ENCODE measurements at regions of chr15 and their contacts with region 1.

Region 1: DNA sequence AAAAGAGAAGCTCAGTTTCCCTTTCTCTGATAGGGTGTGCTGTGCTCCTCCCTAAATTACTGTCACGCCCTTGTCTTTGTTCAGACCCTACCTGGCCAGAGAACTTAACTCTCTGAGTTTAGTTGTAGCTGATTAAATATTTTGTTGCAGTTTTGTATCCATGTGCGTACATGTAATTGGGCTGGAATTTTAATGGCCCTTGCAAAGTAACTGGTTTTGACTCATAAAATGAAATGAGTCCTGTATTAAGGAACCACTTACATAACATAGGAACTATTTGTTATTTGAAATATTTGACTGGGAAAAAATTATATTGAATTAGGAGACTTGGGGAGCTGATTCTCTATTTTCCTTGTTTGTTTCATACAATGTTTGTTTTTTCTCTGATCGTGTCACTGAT is 80.2 kb downstream of the LRRK1 start:
- DNase-seq: peak; percentile 58
- ATAC-seq: peak; percentile 65
- H3K4me3 ChIP-seq: no peak overlapping the region
- H3K27ac ChIP-seq: peak overlapping the region; percentile 35
- H3K4me1 ChIP-seq: peaks cover 28% of the 10 kb centered on the region
- H3K27me3 ChIP-seq: no peaks in the 10 kb centered on the region
- CTCF ChIP-seq: no peak

Region 2: DNA sequence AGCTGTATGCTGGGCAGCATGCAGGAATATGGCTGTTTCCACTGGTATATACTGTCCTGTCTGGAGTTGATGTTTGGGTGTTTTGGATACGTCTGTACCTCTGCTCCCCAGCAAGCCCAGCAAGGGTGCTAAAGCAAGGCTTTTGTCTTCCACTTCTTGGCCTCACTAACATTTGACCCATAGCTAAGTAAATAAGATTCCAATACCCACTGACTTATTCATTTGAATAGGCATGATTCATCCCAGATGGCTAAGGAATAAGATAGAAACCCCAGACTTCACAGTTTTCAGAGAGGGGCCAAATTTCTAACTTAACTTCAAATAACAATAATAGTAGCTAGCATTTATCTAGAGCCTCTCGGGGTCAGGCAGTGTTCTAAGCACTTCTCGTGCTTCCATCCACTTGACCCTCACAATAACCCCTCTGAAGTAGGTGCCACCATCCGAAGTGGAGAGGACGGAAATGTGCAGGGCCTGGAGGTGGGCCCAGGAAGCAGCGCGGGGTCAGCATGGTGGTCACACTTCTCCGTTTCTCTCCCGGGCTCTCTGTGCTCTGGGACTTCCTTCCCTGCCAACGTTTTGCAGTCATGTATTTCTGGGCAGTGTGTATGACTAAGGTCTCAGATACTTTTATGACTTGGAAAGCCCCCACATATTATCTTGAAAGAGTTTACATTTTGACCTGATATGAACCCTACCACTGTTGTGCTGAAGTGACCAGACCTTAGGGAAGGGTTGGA is 40.9 kb before region 1 on chr15:
- CTCF ChIA-PET with region 1: interaction called, 3 read pairs
- POLR2A ChIA-PET with region 1: no interaction called
- intact Hi-C with region 1: loop called (anchors 1 kb)
- DNase-seq: peak; percentile 77
- ATAC-seq: peak; percentile 81
- H3K4me3 ChIP-seq: peak overlapping the region; percentile 55
- H3K27ac ChIP-seq: peak overlapping the region; percentile 96
- H3K4me1 ChIP-seq: peaks cover 30% of the 10 kb centered on the region
- H3K27me3 ChIP-seq: no peaks in the 10 kb centered on the region
- CTCF ChIP-seq: no peak

Region 3: GRCh38 chr15:101024073-101024695 is 24.8 kb after region 1 on chr15:
- CTCF ChIA-PET with region 1: no interaction called
- POLR2A ChIA-PET with region 1: no interaction called
- intact Hi-C with region 1: no loop called
- DNase-seq: no peak
- ATAC-seq: no peak
- H3K4me3 ChIP-seq: no peak overlapping the region
- H3K27ac ChIP-seq: no peak overlapping the region
- H3K4me1 ChIP-seq: no peaks in the 10 kb centered on the region
- H3K27me3 ChIP-seq: no peaks in the 10 kb centered on the region
- CTCF ChIP-seq: no peak